Activated CD4-positive, alpha-beta T cell treated with anti-CD3 and anti-CD28 coated beads, Interleukin-2, amount 10 ng/mL, durations not matched to agents 24 days and 14 days (primary cell): ENCODE measurements at regions of chr5 and their contacts with region 1.

Region 1: GRCh38 chr5:32174011-32174870 is at the start of gene GOLPH3:
- DNase-seq: peak; percentile 98
- H3K4me3 Mint-ChIP-seq: peak within 1 kb of the TSS; percentile 95
- H3K27ac Mint-ChIP-seq: peak within 1 kb of the TSS; percentile 98
- H3K4me1 Mint-ChIP-seq: peaks cover 32% of the 10 kb centered on the region
- H3K27me3 Mint-ChIP-seq: no peaks in the 10 kb centered on the region
- total RNA-seq, gene GOLPH3: 85.4 and 92.7 TPM in 2 replicates

Region 2: DNA sequence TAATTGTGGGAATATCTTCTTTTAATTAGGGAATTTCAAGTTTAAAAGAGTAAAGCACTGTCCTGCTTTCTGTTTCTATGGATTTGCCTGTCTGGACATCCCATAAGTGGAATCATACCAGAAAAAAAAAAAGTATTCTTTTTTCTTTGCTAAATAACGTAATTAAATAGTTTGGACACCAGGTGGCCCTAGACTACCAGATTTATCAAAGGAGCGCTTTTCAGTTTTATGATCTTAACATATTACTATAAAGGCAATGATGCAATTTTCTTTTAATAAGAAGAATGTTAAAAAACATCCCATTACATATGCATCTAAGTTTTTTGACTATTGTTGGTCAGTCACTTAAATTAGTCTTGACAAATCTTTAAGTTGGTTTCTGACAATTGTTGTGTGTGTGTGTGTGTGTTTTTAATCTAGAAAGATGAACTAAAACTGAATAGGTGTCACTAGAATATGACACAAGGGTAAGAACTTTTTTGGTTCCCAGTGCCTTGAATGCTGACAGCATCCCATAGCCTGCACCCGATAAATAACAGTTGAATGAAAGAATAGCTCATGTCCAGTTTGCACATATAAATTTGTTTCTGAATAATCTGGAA is 592.6 kb before region 1 on chr5:
- intact Hi-C with region 1: no loop called
- DNase-seq: no peak
- H3K4me3 Mint-ChIP-seq: no peak overlapping the region
- H3K27ac Mint-ChIP-seq: no peak overlapping the region
- H3K4me1 Mint-ChIP-seq: no peaks in the 10 kb centered on the region
- H3K27me3 Mint-ChIP-seq: peaks cover 15% of the 10 kb centered on the region

Region 3: GRCh38 chr5:32115985-32116384 is 58.3 kb before region 1 on chr5:
- intact Hi-C with region 1: loop called (anchors 5 kb)
- DNase-seq: no peak
- H3K4me3 Mint-ChIP-seq: no peak overlapping the region
- H3K27ac Mint-ChIP-seq: peak overlapping the region; percentile 17
- H3K4me1 Mint-ChIP-seq: peaks cover 27% of the 10 kb centered on the region
- H3K27me3 Mint-ChIP-seq: no peaks in the 10 kb centered on the region

Region 4: DNA sequence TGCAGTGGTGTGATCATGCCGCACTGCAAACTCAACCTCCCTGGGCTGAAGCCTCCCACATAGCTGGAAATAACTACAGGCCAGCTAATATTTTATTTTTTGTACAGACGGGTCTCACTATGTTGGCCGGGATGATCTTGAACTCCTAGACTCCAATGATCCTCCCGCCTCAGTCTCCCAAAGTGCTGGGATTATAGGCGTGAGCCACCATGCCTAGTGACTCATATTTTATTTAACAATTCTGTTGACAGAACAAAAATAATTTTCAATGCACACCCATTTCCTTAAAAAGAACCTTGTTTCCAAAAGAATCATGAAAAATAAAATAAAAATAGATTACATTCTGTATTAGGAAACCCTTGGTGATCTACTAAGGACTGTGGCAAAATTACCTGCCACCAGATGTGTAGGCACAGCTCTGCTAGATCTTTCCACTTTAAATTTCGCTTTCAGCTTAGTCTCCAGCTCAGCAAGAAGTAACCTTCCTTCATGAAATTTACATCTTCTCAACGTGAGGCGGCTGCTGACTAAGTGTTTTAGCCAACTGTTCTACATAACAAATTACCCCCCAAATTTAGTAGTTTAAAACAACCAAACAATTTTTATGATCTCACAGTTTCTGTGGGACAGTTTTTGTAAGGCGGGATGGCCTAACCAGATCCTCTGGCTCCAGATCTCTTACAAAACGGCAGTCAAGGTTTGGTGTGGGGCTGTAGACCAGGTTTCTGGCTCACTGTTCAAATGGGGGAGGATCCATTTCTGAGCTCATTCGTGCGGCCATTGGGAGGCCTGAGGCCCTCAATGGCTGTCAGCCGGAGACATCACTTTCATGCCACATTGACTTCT is 32.5 kb after region 1 on chr5:
- intact Hi-C with region 1: loop called (anchors 1 kb)
- DNase-seq: no peak
- H3K4me3 Mint-ChIP-seq: no peak overlapping the region
- H3K27ac Mint-ChIP-seq: peak overlapping the region; percentile 62
- H3K4me1 Mint-ChIP-seq: peaks cover 17% of the 10 kb centered on the region
- H3K27me3 Mint-ChIP-seq: no peaks in the 10 kb centered on the region

Region 5: DNA sequence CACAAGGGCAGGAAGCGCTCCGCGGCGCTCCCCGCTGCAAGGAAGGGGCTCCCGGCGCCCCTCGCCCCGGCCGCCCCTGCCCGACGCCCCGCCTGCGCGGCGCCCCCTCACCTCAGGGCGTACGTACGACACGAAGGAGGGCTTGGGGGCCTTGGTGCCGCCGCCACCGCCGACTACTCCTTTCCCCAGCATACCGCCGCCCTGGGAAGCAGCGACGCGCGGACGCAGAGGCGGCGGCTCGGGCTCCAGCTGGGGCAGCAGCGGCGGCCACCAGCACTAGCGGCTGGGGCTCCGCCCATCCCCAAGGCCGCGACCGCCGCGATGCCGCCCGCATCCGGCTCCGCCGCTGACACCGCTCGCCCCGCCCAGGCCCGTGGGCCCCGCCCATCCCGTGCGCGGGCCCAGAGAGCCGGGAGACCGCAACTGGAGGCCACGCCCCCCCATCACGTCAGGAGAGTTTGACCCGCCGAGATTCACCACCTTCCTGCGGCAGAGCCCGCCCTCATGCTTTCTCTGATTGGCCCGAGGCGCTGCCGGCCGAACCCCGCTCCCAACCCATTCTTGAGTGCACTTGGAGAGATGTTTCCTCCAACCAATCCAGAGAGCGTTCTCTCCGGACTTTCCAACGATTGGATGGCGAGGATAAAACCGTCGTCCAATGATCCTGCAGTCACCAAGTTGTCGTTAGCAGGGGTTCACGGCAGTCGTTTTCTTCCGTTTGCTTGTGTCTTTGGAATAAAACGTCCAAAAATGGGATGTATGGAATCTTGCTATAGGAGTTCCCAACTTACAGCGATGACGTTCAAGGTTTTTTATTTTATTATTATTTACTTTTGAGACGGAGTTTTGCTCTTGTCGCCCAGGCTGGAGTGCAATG is 138.6 kb after region 1 on chr5 and contains the start of gene MTMR12:
- intact Hi-C with region 1: loop called (anchors 1 kb)
- DNase-seq: peak; percentile 100
- H3K4me3 Mint-ChIP-seq: peak within 1 kb of the TSS; percentile 96
- H3K27ac Mint-ChIP-seq: peak within 1 kb of the TSS; percentile 87
- H3K4me1 Mint-ChIP-seq: peaks cover 28% of the 10 kb centered on the region
- H3K27me3 Mint-ChIP-seq: no peaks in the 10 kb centered on the region
- total RNA-seq, gene MTMR12: 26.5 and 29.8 TPM in 2 replicates